ENCODE measurements at regions of chr10 and their contacts with region 1.

Region 1: DNA sequence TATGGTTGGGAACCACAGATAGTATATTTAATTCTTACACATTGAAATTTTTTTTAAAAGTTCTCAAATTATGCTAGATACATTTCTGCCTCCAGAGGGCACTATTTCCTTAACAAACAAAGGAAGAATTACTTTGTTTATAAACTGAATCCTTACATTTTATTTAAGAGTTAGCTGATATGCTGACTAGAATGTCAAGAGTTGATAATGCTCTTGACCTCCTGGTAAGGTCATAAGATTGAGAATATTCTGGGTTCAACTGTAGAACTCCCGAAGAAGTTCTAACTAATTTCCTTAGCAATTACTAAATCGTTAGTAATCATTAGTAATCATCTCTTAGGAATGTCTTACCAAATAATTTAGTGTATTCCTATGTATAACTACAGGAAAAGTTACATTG is 95.3 kb upstream of the CYP26C1 start:
- DNase-seq: peak; percentile 72
- H3K4me3 ChIP-seq: no peak overlapping the region
- H3K27ac ChIP-seq: no peak overlapping the region
- H3K4me1 ChIP-seq: no peaks in the 10 kb centered on the region
- H3K27me3 ChIP-seq: no peaks in the 10 kb centered on the region
- CTCF ChIP-seq: peak; percentile 71

Region 2: DNA sequence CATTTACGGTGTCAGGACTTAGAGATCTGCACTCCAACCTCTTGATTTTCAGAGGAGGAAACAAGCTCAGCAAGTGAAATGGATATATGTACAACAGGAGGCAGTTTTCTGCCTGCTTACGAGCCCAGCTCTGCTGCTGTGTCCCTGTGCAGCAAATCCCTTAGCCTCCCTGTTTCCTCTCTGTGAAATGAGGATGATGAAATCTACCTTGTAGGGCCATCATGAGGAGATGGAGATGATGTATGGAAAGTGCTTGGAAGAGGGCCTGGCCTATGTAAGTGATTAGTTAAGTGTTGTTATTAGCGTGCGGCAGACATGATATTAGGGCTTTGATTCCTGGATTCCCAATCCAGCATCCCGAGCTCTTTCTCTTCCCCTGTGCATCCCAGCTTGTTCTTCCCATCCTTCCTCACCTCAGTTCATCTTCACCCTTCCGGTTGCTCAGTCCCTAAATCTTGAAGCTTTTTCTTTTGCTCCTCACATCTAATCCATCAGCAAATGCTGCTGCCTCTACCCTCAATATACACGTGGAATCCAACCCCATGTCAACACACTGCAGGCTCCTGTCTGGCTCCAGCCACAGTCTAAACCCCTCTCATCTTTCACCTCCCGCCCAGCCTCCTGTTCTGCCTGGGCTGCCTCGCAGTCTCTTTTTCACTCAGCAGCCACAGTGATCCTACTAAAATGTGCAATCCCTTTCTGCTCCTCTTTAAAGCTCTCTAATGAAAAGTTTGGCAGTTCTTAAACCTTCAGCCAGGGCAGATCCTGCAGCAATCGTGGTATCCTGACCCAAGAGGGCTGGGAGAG is 560.5 kb before region 1 on chr10:
- CTCF ChIA-PET with region 1: no interaction called
- POLR2A ChIA-PET with region 1: interaction called, 12 read pairs
- intact Hi-C with region 1: no loop called
- DNase-seq: no peak
- H3K4me3 ChIP-seq: no peak overlapping the region
- H3K27ac ChIP-seq: no peak overlapping the region
- H3K4me1 ChIP-seq: no peaks in the 10 kb centered on the region
- H3K27me3 ChIP-seq: no peaks in the 10 kb centered on the region
- CTCF ChIP-seq: no peak

Region 3: GRCh38 chr10:92678206-92678605 is 287.1 kb before region 1 on chr10:
- CTCF ChIA-PET with region 1: no interaction called
- POLR2A ChIA-PET with region 1: no interaction called
- intact Hi-C with region 1: no loop called
- DNase-seq: no peak
- H3K4me3 ChIP-seq: no peak overlapping the region
- H3K27ac ChIP-seq: no peak overlapping the region
- H3K4me1 ChIP-seq: no peaks in the 10 kb centered on the region
- H3K27me3 ChIP-seq: no peaks in the 10 kb centered on the region
- CTCF ChIP-seq: no peak

Region 4: GRCh38 chr10:93068411-93069244 is 103.3 kb after region 1 on chr10:
- CTCF ChIA-PET with region 1: no interaction called
- POLR2A ChIA-PET with region 1: no interaction called
- intact Hi-C with region 1: loop called (anchors 5 kb)
- DNase-seq: peak; percentile 66
- H3K4me3 ChIP-seq: peak overlapping the region; percentile 35
- H3K27ac ChIP-seq: no peak overlapping the region
- H3K4me1 ChIP-seq: peaks cover 11% of the 10 kb centered on the region
- H3K27me3 ChIP-seq: peaks cover 90% of the 10 kb centered on the region
- CTCF ChIP-seq: peak; percentile 48

Region 5: GRCh38 chr10:93926613-93927012 is 961.3 kb after region 1 on chr10:
- CTCF ChIA-PET with region 1: no interaction called
- POLR2A ChIA-PET with region 1: no interaction called
- intact Hi-C with region 1: no loop called
- DNase-seq: no peak
- H3K4me3 ChIP-seq: no peak overlapping the region
- H3K27ac ChIP-seq: no peak overlapping the region
- H3K4me1 ChIP-seq: no peaks in the 10 kb centered on the region
- H3K27me3 ChIP-seq: no peaks in the 10 kb centered on the region
- CTCF ChIP-seq: no peak

Measured in A673 (cell line).